Activated T-helper 2 cell treated with anti-CD3 and anti-CD28 coated beads, Interferon-gamma antibody, Interleukin-2, Interleukin-4, amounts not matched to agents 10 μg/mL and 5 μg/mL and 100 μg/mL, durations not matched to agents 14 hours and 24 hours and 36 hours (primary cell): ENCODE measurements at regions of chr5 and their contacts with region 1.

Region 1: DNA sequence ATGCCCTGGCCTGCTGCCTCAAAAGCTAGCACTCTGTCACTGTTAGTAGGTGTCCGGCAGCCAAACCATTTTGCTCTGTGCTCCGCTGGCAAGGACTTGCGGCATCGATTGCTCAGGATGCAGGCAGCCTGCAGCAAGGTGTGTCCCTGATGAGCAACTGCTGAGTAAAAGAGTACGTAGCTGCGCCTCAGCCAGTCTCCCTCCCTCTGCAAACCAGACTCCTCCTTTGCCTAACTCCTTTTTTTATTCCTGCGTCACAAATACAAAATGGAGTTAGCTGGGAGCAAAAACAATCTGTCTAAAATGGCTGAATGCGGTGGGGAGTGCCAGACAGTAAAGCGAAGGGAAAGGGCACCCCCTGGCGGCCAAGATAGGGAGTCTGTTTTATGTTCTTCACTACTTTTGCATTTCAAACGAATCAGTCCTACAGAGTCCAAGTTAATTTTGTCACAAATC is 61.1 kb downstream of the DIAPH1 start:
- DNase-seq: peak; percentile 53
- H3K4me3 Mint-ChIP-seq: no peak overlapping the region
- H3K27ac Mint-ChIP-seq: peak overlapping the region; percentile 73
- H3K4me1 Mint-ChIP-seq: peaks cover 18% of the 10 kb centered on the region
- H3K27me3 Mint-ChIP-seq: no peaks in the 10 kb centered on the region

Region 2: GRCh38 chr5:141359790-141360426 is 197.8 kb before region 1 on chr5 and contains the start of gene PCDHGB2:
- intact Hi-C with region 1: loop called (anchors 5 kb)
- DNase-seq: no peak
- H3K4me3 Mint-ChIP-seq: peak within 1 kb of the TSS; percentile 85
- H3K27ac Mint-ChIP-seq: peak within 1 kb of the TSS; percentile 62
- H3K4me1 Mint-ChIP-seq: peaks cover 2% of the 10 kb centered on the region
- H3K27me3 Mint-ChIP-seq: peaks cover 34% of the 10 kb centered on the region
- total RNA-seq, gene PCDHGB2: 0.85 and 0.91 TPM in 2 replicates

Region 3: GRCh38 chr5:141524604-141525597 is 32.8 kb before region 1 on chr5:
- intact Hi-C with region 1: loop called (anchors 5 kb)
- DNase-seq: peak; percentile 38
- H3K4me3 Mint-ChIP-seq: no peak overlapping the region
- H3K27ac Mint-ChIP-seq: no peak overlapping the region
- H3K4me1 Mint-ChIP-seq: peaks cover 28% of the 10 kb centered on the region
- H3K27me3 Mint-ChIP-seq: no peaks in the 10 kb centered on the region

Region 4: DNA sequence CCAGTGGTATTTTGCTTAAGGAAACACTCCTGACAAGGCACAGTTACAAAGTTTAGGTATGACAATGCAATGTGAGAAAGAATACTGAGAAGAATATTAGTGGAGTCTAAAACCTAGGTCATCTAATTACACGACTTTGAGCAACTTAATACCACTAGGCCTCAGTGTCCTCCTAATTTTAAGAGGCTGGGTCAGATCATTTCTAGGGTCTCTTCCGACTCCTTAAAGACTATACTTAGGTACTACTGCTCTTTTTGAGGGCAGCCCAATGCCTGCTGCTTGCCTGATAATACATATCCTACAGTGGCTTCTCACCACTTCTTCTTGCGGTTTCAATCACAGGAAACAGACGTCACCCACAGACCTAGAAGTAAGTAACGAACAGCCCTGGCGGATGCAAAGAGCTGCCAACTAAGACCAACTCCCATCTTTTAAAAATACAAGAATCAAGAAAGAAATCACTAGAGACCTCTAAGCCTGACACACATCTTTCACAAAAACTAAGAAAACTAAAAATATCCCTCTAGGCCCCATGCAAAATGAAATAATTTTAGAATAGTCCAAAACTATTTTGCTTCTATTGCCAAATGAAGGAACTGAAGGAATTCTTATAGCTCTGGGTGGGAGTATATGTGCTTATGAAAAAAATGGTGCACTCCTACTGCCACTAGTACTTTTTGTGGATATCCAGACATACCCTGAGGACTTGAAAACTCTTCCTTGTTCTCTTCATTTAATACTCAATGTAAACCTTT is 48.0 kb after region 1 on chr5:
- intact Hi-C with region 1: no loop called
- DNase-seq: peak; percentile 72
- H3K4me3 Mint-ChIP-seq: peak overlapping the region; percentile 67
- H3K27ac Mint-ChIP-seq: peak overlapping the region; percentile 90
- H3K4me1 Mint-ChIP-seq: peaks cover 69% of the 10 kb centered on the region
- H3K27me3 Mint-ChIP-seq: no peaks in the 10 kb centered on the region